ENCODE measurements at regions of chr19 and their contacts with region 1.

Region 1: DNA sequence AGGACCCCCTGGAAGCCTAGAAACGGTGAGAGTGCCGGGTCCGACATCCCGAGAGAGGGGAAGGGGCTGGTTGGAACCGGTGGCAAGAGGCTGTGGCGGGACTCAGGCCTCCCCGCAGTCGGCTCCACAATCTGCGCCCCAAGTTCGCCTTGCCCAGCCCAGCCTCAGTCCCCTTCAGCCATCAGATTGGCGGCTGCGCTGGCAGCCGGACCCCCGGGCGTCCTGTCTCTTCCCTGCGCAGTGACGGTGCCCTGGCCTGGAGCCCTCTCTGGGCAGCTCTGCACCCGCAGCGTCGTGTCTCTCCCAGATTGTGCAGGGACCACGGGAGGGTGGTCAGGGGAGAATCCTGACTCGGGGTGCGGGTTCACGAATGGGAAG is 315 bp downstream of the ZNF492 start:
- DNase-seq: peak; percentile 36
- ATAC-seq: peak; percentile 28
- H3K4me3 Mint-ChIP-seq: peak overlapping the region; percentile 93
- H3K27ac Mint-ChIP-seq: peak overlapping the region; percentile 94
- H3K4me1 Mint-ChIP-seq: peaks cover 6% of the 10 kb centered on the region
- H3K27me3 Mint-ChIP-seq: no peaks in the 10 kb centered on the region

Region 2: GRCh38 chr19:21568816-21569493 is 1065.5 kb before region 1 on chr19:
- CTCF ChIA-PET with region 1: no interaction called
- POLR2A ChIA-PET with region 1: no interaction called
- intact Hi-C with region 1: loop called in 1 of 2 experiments (anchors 10 kb)
- DNase-seq: peak; percentile 92
- ATAC-seq: peak; percentile 97
- H3K4me3 Mint-ChIP-seq: peak overlapping the region; percentile 86
- H3K27ac Mint-ChIP-seq: peak overlapping the region; percentile 100
- H3K4me1 Mint-ChIP-seq: peaks cover 29% of the 10 kb centered on the region
- H3K27me3 Mint-ChIP-seq: no peaks in the 10 kb centered on the region

Region 3: DNA sequence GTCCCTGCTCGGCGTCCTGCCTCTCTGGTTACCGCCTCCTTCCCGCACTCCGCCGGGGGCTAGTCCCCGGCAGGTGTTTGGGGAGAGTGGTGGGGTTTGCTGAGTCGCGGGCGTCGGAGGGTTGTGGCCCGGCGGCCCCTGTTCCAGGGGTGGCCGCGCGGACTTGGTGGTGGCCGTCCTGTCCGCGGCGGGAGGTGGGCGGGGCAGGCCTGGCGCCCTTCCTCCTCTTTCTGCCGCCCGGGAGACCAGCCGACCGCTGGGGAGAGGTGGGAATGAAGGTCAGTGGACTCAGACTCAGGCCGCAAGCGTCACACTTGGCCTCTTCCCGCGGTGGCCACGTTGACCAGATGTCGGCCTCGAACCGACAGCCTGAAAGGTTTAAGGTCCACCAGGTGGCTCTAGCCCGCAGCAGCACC is 259.4 kb after region 1 on chr19:
- CTCF ChIA-PET with region 1: no interaction called
- POLR2A ChIA-PET with region 1: no interaction called
- intact Hi-C with region 1: no loop called
- DNase-seq: no peak
- ATAC-seq: no peak
- H3K4me3 Mint-ChIP-seq: no peak overlapping the region
- H3K27ac Mint-ChIP-seq: no peak overlapping the region
- H3K4me1 Mint-ChIP-seq: no peaks in the 10 kb centered on the region
- H3K27me3 Mint-ChIP-seq: no peaks in the 10 kb centered on the region

Region 4: DNA sequence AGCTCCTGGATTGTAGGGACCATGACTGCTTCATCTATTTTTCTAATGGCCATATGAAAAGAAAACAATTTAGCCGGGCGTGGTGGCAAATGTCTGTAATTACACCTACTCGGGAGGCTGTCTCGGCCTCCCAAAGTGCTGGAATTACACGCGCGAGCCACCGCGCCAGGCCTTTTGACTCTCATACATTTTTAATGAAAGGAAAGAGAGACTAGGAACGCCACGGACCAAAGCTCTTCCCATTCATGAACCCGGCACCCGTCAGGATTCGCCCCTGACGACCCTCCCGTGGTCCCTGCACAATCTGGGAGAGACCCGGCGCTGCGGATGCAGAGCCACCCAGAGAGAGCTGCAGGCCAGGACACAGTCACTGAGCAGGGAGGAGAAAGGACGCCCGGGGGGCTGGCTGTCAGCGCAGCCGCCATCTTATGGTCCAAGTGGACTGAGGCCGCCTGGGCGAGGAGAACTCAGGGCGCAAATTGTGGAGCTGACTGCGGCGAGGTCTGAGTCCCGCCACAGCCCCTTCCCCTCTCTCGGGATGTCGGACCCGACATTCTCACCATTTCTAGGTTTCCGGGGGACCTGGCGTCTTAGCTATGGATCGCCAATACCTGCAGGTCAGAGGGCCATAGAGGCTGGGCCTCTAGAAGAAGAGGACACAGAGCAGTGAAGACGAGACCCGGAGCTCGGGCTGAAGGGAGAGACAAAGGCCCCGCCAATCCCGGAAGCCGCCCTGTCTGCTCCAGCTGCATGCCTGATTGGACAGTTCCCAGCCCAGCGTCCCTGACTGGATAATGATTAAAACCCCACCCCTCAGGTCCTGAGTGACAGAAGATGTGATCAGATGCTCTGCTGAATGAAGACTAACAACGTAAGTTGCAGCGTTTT is 1124.0 kb after region 1 on chr19 and contains the start of gene ZNF681:
- CTCF ChIA-PET with region 1: no interaction called
- POLR2A ChIA-PET with region 1: no interaction called
- intact Hi-C with region 1: loop called in 1 of 2 experiments (anchors 5 kb)
- DNase-seq: peak; percentile 94
- ATAC-seq: peak; percentile 93
- H3K4me3 Mint-ChIP-seq: peak within 1 kb of the TSS; percentile 95
- H3K27ac Mint-ChIP-seq: peak within 1 kb of the TSS; percentile 95
- H3K4me1 Mint-ChIP-seq: peaks cover 25% of the 10 kb centered on the region
- H3K27me3 Mint-ChIP-seq: no peaks in the 10 kb centered on the region
- total RNA-seq, gene ZNF681: 5.7 to 9.1 TPM

Measured in activated CD4-positive, alpha-beta T cell treated with anti-CD3 and anti-CD28 coated beads for 36 hours (primary cell).